Posterior vena cava (tissue), 2 donors: ENCODE measurements at regions of chr21 and their contacts with region 1.

Region 1: DNA sequence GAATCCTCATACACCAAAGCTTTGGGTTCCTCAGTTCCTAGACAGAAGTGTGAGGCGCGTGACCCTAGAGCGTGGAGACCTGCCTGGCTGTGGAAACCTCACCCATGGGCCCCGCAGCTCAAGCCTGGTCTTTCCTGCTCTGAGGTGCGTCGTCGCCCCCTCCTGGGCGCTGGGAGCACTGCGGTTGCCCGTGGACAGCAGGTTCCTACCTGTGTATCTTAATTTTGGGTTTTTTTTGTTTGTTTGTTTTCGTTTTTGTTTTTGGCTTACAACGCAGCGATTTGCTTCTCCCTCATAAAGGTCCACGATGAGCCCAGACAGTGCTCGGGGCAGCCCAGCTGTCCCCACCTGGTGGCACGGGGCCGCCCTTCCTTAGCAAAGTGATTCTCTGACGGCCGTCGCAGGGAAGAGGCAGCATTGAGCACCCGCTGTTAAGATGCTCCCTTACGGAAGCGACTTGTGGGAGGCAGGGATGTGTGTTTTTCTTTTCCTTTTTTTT is 36.6 kb upstream of the TRAPPC10 start:
- DNase-seq: peak; percentile 93

Region 2: GRCh38 chr21:42887326-42887725 is 1088.2 kb before region 1 on chr21:
- intact Hi-C with region 1: loop called in 1 of 2 experiments (anchors 5 kb)
- DNase-seq: no peak

Region 3: DNA sequence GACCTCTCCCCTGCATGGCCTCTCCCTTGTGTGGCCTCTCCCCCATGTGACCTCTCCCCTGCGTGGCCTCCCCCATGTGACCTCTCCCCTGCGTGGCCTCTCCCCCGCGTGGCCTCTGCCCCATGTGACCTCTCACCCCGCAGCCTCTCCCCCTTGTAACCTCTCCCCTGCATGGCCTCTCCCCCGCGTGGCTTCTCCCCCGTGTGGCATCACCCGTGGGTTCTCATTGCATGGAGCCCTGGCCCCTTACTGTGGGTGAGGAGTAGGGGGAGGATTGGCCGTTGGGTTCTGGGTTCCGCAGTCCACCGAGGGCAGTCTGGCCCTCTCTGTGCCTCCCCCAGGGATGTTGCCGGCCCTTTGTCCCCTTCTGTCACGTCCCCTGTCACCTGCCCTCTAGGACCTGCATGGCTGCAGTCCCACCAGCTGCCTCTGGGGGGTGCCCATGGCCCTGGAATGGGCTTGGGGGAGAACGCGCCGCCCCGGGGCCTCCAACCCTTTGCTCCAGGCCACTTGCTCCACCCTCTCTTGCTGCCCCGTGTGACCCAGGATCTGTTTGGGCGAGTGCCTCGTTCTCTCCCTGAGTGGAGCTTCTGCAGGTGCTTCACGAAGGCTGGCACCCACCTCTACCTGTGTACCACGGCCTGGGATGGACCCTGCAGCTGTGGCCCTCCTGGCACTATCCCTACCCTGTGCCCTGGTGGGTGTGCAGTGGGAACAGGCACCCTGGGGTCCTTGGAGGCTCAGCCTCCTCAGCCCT is 164.9 kb before region 1 on chr21:
- intact Hi-C with region 1: no loop called
- DNase-seq: peak; percentile 96